Endothelial cell of umbilical vein (primary cell): ENCODE measurements at regions of chr20 and their contacts with region 1.

Region 1: DNA sequence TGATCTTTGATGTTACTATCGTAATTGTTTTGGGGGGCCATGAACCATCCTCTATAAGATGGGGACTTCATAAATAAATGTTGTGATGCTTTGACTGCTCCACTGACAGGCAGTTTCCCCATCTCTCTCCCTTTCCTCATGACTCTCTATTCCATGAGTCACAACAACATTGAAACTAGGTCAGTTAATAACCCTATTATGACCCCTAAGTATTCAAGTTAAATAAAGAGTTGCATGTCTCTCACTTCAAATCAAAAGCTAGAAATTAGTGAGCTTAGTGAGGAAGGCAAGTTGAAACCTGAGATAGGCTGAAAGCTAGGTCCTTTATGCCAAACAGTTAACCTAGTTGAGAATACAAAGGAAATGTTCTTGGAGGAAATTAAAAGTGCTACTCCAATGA is 491.0 kb downstream of the HAO1 start:
- DNase-seq: no peak
- H3K4me3 ChIP-seq: no peak overlapping the region
- H3K27ac ChIP-seq: no peak overlapping the region
- H3K4me1 ChIP-seq: no peaks in the 10 kb centered on the region
- H3K27me3 ChIP-seq: no peaks in the 10 kb centered on the region
- CTCF ChIP-seq: no peak
- POLR2A ChIP-seq: no peak

Region 2: GRCh38 chr20:7426890-7427496 is 22.3 kb before region 1 on chr20:
- CTCF ChIA-PET with region 1: no interaction called
- POLR2A ChIA-PET with region 1: no interaction called
- dilution Hi-C with region 1: no loop called
- intact Hi-C with region 1: no loop called
- DNase-seq: no peak
- H3K4me3 ChIP-seq: no peak overlapping the region
- H3K27ac ChIP-seq: no peak overlapping the region
- H3K4me1 ChIP-seq: no peaks in the 10 kb centered on the region
- H3K27me3 ChIP-seq: no peaks in the 10 kb centered on the region
- CTCF ChIP-seq: no peak
- POLR2A ChIP-seq: no peak

Region 3: GRCh38 chr20:7470912-7471311 is 21.6 kb after region 1 on chr20:
- CTCF ChIA-PET with region 1: no interaction called
- POLR2A ChIA-PET with region 1: no interaction called
- dilution Hi-C with region 1: no loop called
- intact Hi-C with region 1: loop called (anchors 1 kb)
- DNase-seq: no peak
- H3K4me3 ChIP-seq: no peak overlapping the region
- H3K27ac ChIP-seq: no peak overlapping the region
- H3K4me1 ChIP-seq: no peaks in the 10 kb centered on the region
- H3K27me3 ChIP-seq: no peaks in the 10 kb centered on the region
- CTCF ChIP-seq: no peak
- POLR2A ChIP-seq: no peak